Body of pancreas (tissue), 4 donors: ENCODE measurements at regions of chr9 and their contacts with region 1.

Region 1: GRCh38 chr9:33081128-33081851 is 4.8 kb upstream of the SMU1 start:
- DNase-seq: peak; percentile 57 to 83 (median 62)
- ATAC-seq: peak; percentile 69
- H3K4me3 ChIP-seq: no peak overlapping the region
- H3K27ac ChIP-seq: no peak overlapping the region
- H3K4me1 ChIP-seq: peaks cover 10% of the 10 kb centered on the region
- H3K27me3 ChIP-seq: no peaks in the 10 kb centered on the region
- CTCF ChIP-seq: peak in 6 of 7 experiments; percentile 62 to 94 (median 91)
- POLR2A ChIP-seq: no peak

Region 2: DNA sequence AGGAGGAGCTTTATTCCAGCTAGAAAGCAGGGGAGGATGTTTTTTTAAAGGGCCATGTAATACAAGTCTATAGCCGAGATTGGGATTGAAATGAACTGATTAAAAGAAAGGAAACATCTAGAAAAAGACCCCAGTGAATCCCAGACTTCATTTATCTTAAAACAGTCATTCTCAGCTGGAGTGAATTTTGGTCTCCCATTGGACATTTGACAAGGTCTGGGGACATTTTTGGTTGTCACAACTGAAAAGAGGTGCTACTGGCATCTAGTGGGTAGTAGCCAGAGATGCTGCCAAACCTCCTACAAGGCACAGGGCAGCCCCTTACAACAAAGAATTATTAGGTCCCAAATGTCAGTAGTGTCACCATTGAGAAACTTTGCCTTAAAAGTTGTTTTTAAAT is 142.4 kb after region 1 on chr9:
- intact Hi-C with region 1: loop called (anchors 5 kb)
- DNase-seq: no peak
- ATAC-seq: no peak
- H3K4me3 ChIP-seq: no peak overlapping the region
- H3K27ac ChIP-seq: no peak overlapping the region
- H3K4me1 ChIP-seq: peaks cover 4% of the 10 kb centered on the region
- H3K27me3 ChIP-seq: no peaks in the 10 kb centered on the region
- CTCF ChIP-seq: no peak
- POLR2A ChIP-seq: no peak